AG04449 (cell line): ENCODE measurements at regions of chr22 and their contacts with region 1.

Region 1: DNA sequence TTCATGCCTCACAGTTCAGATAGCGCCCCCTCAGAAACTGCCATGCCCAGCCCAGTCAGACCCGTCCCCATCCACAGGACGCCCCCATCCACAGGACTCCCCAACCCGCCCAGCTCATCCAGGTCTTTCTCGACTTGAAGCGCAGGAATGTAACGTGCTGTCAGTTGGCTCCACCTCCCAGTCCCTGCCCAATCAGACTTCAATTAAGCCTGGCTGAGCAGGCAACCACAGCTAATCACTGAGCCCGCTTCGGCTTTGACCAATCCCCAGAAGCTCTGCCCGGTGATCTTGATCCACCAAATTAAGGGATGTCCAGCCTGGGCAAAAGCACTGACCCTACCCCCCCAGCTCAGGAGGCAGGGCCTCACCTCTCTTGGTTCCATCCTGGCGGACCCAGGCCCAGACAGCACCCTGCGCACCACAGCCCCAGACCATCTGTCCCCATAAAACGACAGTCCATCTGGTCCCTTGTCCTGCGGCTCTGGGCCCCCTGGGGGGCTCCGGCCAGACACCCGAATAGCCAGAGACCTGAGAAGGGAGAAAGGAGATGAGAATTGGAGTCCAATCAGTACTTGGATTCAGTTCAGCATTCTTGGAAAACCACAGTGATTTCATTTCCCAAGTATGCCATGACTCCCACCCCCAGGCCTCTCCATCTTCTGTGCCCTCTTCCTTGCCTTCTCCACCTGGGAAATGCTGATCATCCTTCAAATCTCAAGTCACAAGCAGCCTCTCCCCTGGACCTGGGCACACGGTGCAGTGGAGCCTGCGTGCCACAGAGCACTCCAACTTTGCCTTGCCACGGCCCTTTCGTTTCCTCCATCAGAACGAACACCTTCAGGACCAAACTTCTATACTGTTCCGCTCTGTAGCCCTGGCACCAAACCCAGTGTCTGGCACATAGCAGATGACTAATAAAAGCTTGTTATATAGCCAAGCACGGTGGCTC is 10.7 kb upstream of the MFNG start:
- DNase-seq: peak; percentile 61
- H3K4me3 ChIP-seq: no peak overlapping the region
- CTCF ChIP-seq: no peak

Region 2: GRCh38 chr22:37334859-37335805 is 161.8 kb before region 1 on chr22:
- CTCF ChIA-PET with region 1: no interaction called
- POLR2A ChIA-PET with region 1: no interaction called
- DNase-seq: no peak
- H3K4me3 ChIP-seq: no peak overlapping the region
- CTCF ChIP-seq: no peak

Region 3: DNA sequence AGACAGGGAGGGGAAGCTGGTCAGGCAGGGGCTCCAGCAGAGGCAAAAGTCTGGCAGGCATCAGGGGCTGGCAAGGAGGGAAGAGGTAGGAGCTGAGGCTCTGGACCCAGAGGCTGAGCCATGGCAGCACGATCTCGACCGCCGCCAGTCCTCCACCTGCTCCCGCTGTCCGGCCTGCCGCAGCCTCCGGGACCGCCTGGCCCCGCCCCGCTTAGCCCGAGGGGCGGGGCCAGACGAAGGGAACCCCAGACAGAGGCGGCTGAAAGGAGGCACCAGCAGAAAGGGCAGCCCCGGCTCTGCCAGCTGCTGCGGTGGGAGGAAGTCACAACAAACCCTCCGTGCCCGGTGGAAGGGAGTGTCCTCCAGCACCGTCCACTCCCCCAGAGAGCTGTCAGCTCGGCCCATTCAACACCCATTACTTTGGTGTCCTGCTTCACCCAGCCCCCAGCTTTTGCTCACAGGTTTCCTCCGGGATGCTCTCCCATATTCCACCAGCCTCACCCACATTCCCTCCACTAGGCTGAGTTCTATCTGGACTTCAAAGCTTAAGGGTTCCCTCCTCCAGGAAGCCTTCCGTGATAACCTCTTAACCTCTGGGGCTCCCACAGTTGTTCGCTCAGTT is 10.6 kb before region 1 on chr22 and contains the start of gene MFNG:
- CTCF ChIA-PET with region 1: interaction called, 13 read pairs
- POLR2A ChIA-PET with region 1: no interaction called
- DNase-seq: no peak
- H3K4me3 ChIP-seq: no peak within 1 kb of the TSS
- CTCF ChIP-seq: no peak